Transverse colon (tissue), 4 donors: ENCODE measurements at regions of chr2 and their contacts with region 1.

Region 1: GRCh38 chr2:68196120-68196716 is 38.5 kb downstream of the PNO1 start:
- DNase-seq: peak; percentile 42
- H3K4me3 ChIP-seq: no peak overlapping the region
- H3K27ac ChIP-seq: no peak overlapping the region
- H3K4me1 ChIP-seq: peaks cover 0 to 56% (median 14%) of the 10 kb centered on the region in 4 donors
- H3K27me3 ChIP-seq: no peaks in the 10 kb centered on the region
- CTCF ChIP-seq: peak in 3 of 5 experiments; percentile 58 to 83 (median 75)
- EP300 ChIP-seq: no peak
- POLR2A ChIP-seq: no peak

Region 2: GRCh38 chr2:68091439-68092034 is 104.7 kb before region 1 on chr2:
- in situ Hi-C with region 1: no loop called
- intact Hi-C with region 1: no loop called
- DNase-seq: no peak
- H3K4me3 ChIP-seq: no peak overlapping the region
- H3K27ac ChIP-seq: no peak overlapping the region
- H3K4me1 ChIP-seq: no peaks in the 10 kb centered on the region
- H3K27me3 ChIP-seq: no peaks in the 10 kb centered on the region
- CTCF ChIP-seq: no peak
- EP300 ChIP-seq: no peak
- POLR2A ChIP-seq: no peak

Region 3: GRCh38 chr2:68244456-68244855 is 48.2 kb after region 1 on chr2:
- in situ Hi-C with region 1: loop called in 1 of 4 experiments (anchors 5 kb)
- intact Hi-C with region 1: no loop called
- DNase-seq: no peak
- H3K4me3 ChIP-seq: no peak overlapping the region
- H3K27ac ChIP-seq: no peak overlapping the region
- H3K4me1 ChIP-seq: peaks cover 22 to 84% (median 48%) of the 10 kb centered on the region in 4 donors
- H3K27me3 ChIP-seq: no peaks in the 10 kb centered on the region
- CTCF ChIP-seq: peak in 2 of 5 experiments; percentile 6 to 7
- EP300 ChIP-seq: no peak
- POLR2A ChIP-seq: no peak

Region 4: DNA sequence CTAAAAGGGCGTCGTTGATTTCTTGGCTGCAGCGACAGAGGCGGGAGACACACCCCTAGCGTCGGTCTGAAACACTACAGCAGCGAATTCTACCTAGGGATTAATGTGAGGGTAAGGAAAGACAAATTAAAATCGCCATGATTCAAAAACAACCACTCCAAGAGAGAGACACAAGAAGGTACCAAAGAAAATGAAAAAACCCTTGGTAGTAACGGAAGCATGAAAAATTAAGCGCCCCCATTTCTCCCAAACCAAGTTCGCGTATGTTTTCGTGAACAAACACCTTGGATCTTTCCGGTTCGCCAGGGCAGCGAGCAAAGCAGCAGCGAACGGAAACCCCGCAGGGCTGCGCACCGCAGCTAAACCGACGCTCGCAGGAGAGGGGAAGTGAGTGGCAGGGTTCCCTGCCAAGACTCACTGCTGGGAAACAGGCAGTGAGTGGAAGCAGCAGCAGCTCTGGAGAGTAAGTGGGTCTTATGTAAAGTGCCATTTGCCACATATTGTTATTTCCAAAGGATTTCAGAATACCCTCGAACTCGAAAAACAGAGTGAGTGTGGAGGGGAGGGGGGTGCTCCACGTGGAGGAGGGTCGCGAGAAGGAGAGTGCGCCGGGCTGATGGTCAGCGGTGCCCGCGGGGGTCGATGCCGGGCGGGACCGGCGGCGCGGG is 55.1 kb after region 1 on chr2:
- in situ Hi-C with region 1: no loop called
- intact Hi-C with region 1: loop called (anchors 5 kb)
- DNase-seq: peak; percentile 86
- H3K4me3 ChIP-seq: peak overlapping the region; percentile 71 to 97 (median 81)
- H3K27ac ChIP-seq: peak overlapping the region; percentile 98 to 100 (median 98)
- H3K4me1 ChIP-seq: peaks cover 28 to 55% (median 49%) of the 10 kb centered on the region in 4 donors
- H3K27me3 ChIP-seq: no peaks in the 10 kb centered on the region
- CTCF ChIP-seq: peak; percentile 74 to 94 (median 77)
- EP300 ChIP-seq: no peak
- POLR2A ChIP-seq: peak; percentile 61